ENCODE measurements at regions of chr19 and their contacts with region 1.

Region 1: GRCh38 chr19:35352448-35353304 is 5.0 kb downstream of the FFAR1 start:
- DNase-seq: peak; percentile 59
- ATAC-seq: peak; percentile 91
- H3K4me3 ChIP-seq: no peak overlapping the region
- H3K27ac ChIP-seq: no peak overlapping the region
- H3K4me1 ChIP-seq: peaks cover 0 to 7% of the 10 kb centered on the region in 2 experiments; a peak in 1 of 4 replicates
- H3K27me3 ChIP-seq: peaks cover 4% of the 10 kb centered on the region; the same call in 1 of the 2 replicates
- CTCF ChIP-seq: peak; percentile 85 to 92 (median 86)
- POLR2A ChIP-seq: no peak
- RAD21 ChIP-seq: peak; percentile 97

Region 2: DNA sequence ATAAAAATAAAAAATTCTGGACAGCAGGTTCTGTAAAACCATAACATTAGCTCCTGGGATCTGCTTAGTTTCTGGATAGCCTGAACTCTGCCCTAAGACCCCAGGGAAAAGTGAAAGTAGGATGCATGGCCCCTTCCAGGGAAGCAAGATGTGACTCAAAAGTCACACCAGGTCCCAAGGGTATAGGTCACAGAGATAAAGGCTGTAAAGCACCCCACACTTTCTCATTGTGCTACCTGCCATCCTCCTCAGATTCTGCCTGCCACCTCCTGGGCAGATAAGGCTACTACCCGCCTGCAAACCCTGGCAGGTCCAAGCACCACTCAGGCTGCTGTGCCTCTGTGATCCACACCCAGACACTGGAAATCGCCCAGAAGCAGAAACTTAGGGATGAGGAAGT is 116.0 kb after region 1 on chr19:
- CTCF ChIA-PET with region 1: interaction called, 43 read pairs
- POLR2A ChIA-PET with region 1: no interaction called
- RAD21 ChIA-PET with region 1: interaction called, 4 to 11 read pairs
- intact Hi-C with region 1: loop called (anchors 1 kb)
- DNase-seq: peak; percentile 22
- ATAC-seq: peak; percentile 100
- H3K4me3 ChIP-seq: no peak overlapping the region
- H3K27ac ChIP-seq: no peak overlapping the region
- H3K4me1 ChIP-seq: no peaks in the 10 kb centered on the region
- H3K27me3 ChIP-seq: no peaks in the 10 kb centered on the region
- CTCF ChIP-seq: peak; percentile 71 to 82 (median 79)
- POLR2A ChIP-seq: no peak
- RAD21 ChIP-seq: peak; percentile 88

Region 3: GRCh38 chr19:35495107-35496064 is 142.7 kb after region 1 on chr19:
- CTCF ChIA-PET with region 1: interaction called, 29 read pairs
- POLR2A ChIA-PET with region 1: interaction called, 5 read pairs
- RAD21 ChIA-PET with region 1: interaction called, 7 to 8 read pairs
- intact Hi-C with region 1: loop called (anchors 1 kb)
- DNase-seq: peak; percentile 35
- ATAC-seq: peak; percentile 94
- H3K4me3 ChIP-seq: peak overlapping the region; percentile 20 to 27; a peak in 3 of 4 replicates
- H3K27ac ChIP-seq: 0 out of 2 replicates have a peak overlapping the region, but pooled peaks have one; percentile 6
- H3K4me1 ChIP-seq: peaks cover 4 to 11% of the 10 kb centered on the region in 2 experiments; a peak in 3 of 4 replicates
- H3K27me3 ChIP-seq: no peaks in the 10 kb centered on the region; the same call in 1 of the 2 replicates
- CTCF ChIP-seq: peak; percentile 81 to 98 (median 90); a peak in 5 of 6 replicates
- POLR2A ChIP-seq: no peak
- RAD21 ChIP-seq: peak; percentile 78

Measured in HCT116 (cell line).